CD14-positive monocyte (primary cell): ENCODE measurements at regions of chr3 and their contacts with region 1.

Region 1: DNA sequence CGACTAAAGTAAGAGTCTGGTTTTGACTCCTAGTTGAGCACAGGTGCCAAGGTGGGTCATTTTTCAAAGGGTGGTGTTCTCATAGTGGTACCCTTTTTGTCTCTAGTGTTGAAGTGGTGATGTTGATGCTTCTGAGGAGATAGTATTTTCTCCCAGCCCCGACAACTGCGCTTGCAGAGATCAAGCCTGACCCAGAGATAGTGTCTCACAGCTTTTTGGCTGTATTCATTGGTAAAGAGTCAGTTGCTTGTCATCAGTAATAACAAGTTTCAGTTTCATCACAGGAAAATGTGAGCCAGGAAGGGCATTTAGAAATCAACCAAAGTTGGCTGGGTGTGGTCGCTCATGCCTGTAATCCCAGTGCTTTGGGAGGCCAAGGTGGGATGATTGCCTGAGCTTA is 139.3 kb downstream of the NFKBIZ start:
- DNase-seq: peak; percentile 44 to 62 (median 57)
- H3K4me3 ChIP-seq: peak overlapping the region in 1 of 3 experiments; percentile 5
- H3K4me3 Mint-ChIP-seq: no peak overlapping the region
- H3K27ac ChIP-seq: peak overlapping the region; percentile 39 to 82
- H3K27ac Mint-ChIP-seq: peak overlapping the region; percentile 38 to 94 (median 86)
- H3K4me1 ChIP-seq: peaks cover 23 to 25% of the 10 kb centered on the region in 2 donors
- H3K4me1 Mint-ChIP-seq: peaks cover 27% of the 10 kb centered on the region
- H3K27me3 ChIP-seq: no peaks in the 10 kb centered on the region
- H3K27me3 Mint-ChIP-seq: no peaks in the 10 kb centered on the region
- CTCF ChIP-seq: no peak

Region 2: DNA sequence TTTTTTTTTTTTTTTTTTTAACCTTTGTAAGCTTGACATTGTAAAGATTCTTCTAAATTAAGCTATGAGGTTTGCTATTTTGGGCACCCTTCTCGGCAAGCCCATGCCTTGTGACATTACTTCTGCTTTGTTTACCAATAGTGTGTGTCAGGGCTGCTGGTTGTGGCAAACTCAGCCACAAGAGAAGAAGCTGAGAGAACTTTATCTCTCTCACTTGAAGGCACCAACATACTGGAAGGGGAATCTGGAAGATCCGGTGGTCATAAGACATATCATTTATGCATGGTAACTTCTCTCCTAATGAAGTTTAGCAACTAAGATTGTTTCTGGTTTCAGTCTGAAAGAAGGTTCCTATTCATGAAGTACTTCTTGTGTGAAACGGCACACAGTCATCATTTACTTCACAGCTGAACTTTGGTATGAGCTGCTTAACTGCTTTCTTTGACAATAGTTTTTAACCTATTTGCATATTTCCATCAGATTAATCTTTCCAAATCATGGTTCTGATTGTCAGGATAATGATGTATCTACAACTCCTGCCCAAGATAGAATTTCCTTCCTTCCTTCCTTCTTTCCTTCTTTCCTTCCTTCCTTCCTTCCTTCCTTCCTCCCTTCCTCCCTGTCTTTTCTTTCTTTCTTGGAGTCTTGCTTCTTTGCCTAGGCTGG is 50.0 kb after region 1 on chr3:
- intact Hi-C with region 1: loop called in 1 of 2 experiments (anchors 5 kb)
- DNase-seq: peak; percentile 33 to 70 (median 58)
- H3K4me3 ChIP-seq: peak overlapping the region in 1 of 3 experiments; percentile 4
- H3K4me3 Mint-ChIP-seq: peak overlapping the region in 1 of 2 donors; percentile 55
- H3K27ac ChIP-seq: peak overlapping the region in 1 of 2 donors; percentile 48
- H3K27ac Mint-ChIP-seq: peak overlapping the region; percentile 72 to 93 (median 89)
- H3K4me1 ChIP-seq: peaks cover 14 to 27% of the 10 kb centered on the region in 2 donors
- H3K4me1 Mint-ChIP-seq: peaks cover 20% of the 10 kb centered on the region
- H3K27me3 ChIP-seq: no peaks in the 10 kb centered on the region
- H3K27me3 Mint-ChIP-seq: peaks cover 0 to 3% (median 0%) of the 10 kb centered on the region in 3 donors
- CTCF ChIP-seq: no peak